Gastrocnemius medialis (tissue), 4 donors: ENCODE measurements at regions of chr10 and their contacts with region 1.

Region 1: GRCh38 chr10:15097011-15097812 is at the start of gene RPP38:
- DNase-seq: peak; percentile 91 to 95
- ATAC-seq: peak; percentile 98
- H3K4me3 ChIP-seq: peak within 1 kb of the TSS; percentile 74 to 92 (median 84)
- H3K27ac ChIP-seq: peak within 1 kb of the TSS; percentile 88 to 98 (median 93)
- H3K4me1 ChIP-seq: peaks cover 18 to 20% of the 10 kb centered on the region in 2 donors
- H3K27me3 ChIP-seq: no peaks in the 10 kb centered on the region
- CTCF ChIP-seq: no peak
- POLR2A ChIP-seq: peak; percentile 70
- total RNA-seq, gene RPP38: 8.9 to 17.2 (median 12.8) TPM

Region 2: DNA sequence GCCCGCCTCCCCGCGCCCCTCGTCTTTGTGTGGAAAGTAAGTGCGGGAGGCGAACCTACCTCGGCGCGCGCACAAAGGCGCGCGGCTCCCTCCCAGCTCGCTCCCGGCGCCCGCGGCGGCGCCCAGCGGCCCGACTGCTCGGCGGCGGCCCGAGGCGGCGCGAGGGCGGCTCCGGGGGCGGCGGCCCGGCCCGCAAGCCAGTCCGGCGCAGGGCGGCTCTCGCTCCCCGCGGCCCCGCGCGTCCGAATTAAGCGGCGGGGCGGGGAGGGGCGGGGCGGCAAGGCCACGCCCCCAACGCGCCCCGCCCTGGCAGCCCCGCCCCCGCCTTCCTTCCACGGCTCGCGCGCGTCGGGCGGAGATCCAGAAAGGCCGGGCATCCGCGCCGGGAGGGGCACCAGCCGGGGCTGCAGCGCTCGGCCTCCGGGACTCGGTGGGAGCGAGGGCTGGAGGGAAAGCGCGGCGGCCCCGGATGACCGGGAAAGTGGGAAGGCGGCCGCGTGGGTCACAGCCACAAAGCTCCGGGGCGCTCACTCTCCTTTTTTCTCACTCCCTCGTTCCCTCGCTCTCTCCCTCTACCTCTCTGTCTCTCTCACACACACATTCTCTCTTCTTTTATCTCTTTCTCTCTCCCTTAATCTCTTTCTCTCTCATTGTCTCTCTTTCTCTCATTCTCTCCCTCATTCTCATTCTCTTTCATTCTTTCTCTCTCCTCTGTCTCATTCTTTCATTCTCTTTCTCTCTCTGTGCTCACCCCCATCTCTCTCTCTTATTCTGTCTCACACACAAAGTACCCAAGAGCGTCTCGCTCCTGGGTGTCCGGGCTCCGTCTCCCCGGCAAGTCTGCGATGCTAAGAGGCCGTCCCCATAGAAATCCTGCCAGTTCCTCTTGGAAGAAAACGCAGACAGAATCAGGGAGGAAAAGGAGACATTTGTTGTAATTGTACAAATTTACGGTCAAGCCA is 492.8 kb before region 1 on chr10:
- in situ Hi-C with region 1: no loop called
- intact Hi-C with region 1: loop called (anchors 2 kb)
- DNase-seq: peak; percentile 52 to 53
- ATAC-seq: peak; percentile 89 to 90
- H3K4me3 ChIP-seq: peak overlapping the region; percentile 56 to 79 (median 66)
- H3K27ac ChIP-seq: peak overlapping the region; percentile 30 to 58 (median 44)
- H3K4me1 ChIP-seq: peaks cover 7 to 12% of the 10 kb centered on the region in 2 donors
- H3K27me3 ChIP-seq: no peaks in the 10 kb centered on the region
- CTCF ChIP-seq: no peak
- POLR2A ChIP-seq: peak in 1 of 2 donors; percentile 66

Region 3: DNA sequence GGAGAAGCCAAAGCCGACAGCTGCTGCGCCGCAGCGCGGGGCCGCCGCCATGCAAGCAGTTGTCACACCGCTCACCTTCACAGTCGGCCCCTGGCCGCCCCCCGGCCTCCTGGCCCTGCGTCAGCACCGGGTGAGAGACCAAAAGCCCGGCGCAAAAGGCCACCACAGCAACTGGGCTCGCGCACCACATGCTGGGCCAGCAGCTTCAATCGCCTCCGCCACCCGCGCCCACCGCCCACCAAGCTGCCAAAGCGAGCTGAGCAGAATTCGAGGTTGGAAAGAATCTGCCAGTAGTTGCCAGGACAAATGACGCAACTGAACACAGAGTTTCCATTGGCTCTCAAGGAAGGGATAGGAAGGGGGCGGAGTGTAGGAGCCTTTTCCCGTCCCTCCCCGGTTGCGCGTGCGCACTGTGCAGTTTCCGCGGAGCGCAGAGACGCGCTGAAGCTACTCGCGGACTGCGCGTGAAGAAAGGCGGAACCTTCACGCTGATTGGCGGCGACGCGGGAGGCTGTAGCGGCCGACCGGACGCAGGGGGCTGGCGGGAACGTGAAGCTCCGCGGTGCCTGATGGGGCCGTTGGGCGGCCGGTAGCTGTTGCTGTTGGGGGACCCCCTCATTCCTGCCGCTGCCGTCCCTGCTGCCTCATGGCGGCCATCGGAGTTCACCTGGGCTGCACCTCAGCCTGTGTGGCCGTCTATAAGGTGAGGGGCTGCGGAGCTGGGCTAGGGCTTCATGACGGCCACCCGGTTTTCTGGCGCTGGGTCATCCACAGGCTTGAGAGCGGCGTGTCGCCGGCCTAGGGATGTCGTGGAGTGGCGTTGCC is 259.2 kb before region 1 on chr10 and contains the starts of genes CDNF, HSPA14 and MSANTD7:
- in situ Hi-C with region 1: loop called in 2 of 4 experiments (anchors 10 to 25 kb)
- intact Hi-C with region 1: loop called (anchors 5 kb)
- DNase-seq: peak; percentile 98 to 99
- ATAC-seq: peak; percentile 98 to 99
- H3K4me3 ChIP-seq: peak within 1 kb of the TSS; percentile 92 to 98 (median 94)
- H3K27ac ChIP-seq: peak within 1 kb of the TSS; percentile 92 to 98 (median 96)
- H3K4me1 ChIP-seq: peaks cover 22 to 26% of the 10 kb centered on the region in 2 donors
- H3K27me3 ChIP-seq: no peaks in the 10 kb centered on the region
- CTCF ChIP-seq: no peak
- POLR2A ChIP-seq: peak; percentile 81 to 93
- total RNA-seq, gene CDNF: 8.6 to 18.3 (median 10.9) TPM
- total RNA-seq, gene HSPA14: 17.7 to 25.5 (median 22.1) TPM
- total RNA-seq, gene MSANTD7: 4.7 to 8.5 (median 5.8) TPM

Region 4: DNA sequence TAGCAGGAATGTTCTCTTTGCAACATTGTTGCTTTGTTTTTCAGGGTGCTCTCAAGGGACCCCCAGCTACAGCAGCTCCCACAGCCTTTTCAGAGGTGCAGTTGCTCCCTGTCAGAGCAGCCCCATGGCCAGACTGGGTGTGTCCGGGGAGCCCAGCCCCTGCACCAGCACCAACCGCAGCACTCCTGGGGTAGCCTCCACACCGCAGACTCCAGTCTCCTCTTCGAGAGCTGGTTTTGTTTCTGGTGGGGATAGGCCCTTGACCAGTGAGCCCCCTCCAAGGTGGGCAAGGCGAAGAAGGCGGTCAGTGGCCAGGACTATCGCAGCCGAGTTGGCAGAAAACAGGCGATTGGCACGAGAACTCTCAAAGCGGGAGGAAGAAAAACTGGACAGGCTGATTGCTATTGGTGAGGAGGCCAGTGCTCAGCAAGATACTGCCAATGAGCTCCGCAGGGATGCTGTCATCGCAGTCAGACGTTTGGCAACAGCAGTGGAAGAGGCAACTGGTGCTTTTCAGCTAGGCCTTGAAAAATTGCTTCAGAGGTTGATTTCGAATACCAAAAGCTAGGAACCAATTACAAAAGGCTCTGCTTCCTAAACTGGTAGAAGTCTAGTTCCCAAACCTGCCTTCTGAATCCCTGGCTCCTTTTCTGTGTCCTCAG is 253.8 kb before region 1 on chr10:
- in situ Hi-C with region 1: loop called in 2 of 4 experiments (anchors 10 to 25 kb)
- intact Hi-C with region 1: loop called (anchors 5 kb)
- DNase-seq: no peak
- ATAC-seq: no peak
- H3K4me3 ChIP-seq: no peak overlapping the region
- H3K27ac ChIP-seq: no peak overlapping the region
- H3K4me1 ChIP-seq: peaks cover 7 to 11% of the 10 kb centered on the region in 2 donors
- H3K27me3 ChIP-seq: no peaks in the 10 kb centered on the region
- CTCF ChIP-seq: no peak
- POLR2A ChIP-seq: no peak

Region 5: GRCh38 chr10:14878266-14879054 is 218.8 kb before region 1 on chr10 and contains the start of gene SUV39H2:
- in situ Hi-C with region 1: no loop called
- intact Hi-C with region 1: loop called (anchors 5 kb)
- DNase-seq: peak; percentile 89 to 93
- ATAC-seq: peak; percentile 85 to 88
- H3K4me3 ChIP-seq: peak within 1 kb of the TSS; percentile 89 to 95 (median 94)
- H3K27ac ChIP-seq: peak within 1 kb of the TSS; percentile 97 to 99 (median 99)
- H3K4me1 ChIP-seq: peaks cover 30 to 34% of the 10 kb centered on the region in 2 donors
- H3K27me3 ChIP-seq: no peaks in the 10 kb centered on the region
- CTCF ChIP-seq: peak in 2 of 5 experiments; percentile 5 to 8
- POLR2A ChIP-seq: peak; percentile 87 to 88
- total RNA-seq, gene SUV39H2: 0.71 to 7.4 (median 5.0) TPM

Region 6: DNA sequence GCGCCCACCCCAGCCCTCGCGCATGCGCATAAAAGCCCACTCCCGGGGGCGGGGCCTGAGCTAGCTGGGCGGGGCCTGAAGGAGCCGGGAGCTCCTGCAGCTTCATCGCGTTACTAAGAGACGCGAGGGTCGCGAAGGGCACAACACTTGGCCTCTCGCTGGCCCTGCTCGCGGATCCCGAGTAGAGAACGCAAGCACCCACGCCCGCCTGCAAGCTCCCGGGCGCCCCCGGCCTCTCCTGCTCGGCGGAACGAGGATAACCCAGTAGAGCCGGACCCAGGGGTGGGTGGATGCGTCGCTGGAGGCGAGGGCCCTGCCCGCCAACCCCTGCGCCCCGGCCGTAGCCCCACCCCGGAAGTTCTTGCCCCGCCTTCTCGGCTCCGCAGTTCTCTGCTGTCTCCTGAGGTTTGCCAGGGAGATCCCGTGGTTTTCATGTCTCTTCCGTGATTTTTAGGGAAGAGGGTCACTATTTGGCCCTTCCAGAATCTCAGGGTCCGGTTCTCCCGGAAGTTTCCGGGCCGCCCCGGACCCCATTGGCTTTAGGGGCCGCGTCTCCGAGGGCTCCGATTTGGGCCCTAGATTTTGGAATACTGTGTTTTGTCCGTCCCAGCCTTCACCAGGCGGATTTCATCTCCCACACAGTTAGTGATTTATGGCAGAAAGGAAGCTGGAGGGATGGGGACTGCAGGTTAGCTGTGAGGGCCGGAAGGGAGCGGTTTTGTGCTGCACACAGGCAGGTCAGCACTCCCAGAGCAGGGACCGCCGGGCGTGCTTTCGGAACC is 137.7 kb before region 1 on chr10 and contains the start of gene MEIG1:
- in situ Hi-C with region 1: loop called in 3 of 4 experiments (anchors 10 kb)
- intact Hi-C with region 1: loop called (anchors 2 kb)
- DNase-seq: peak; percentile 90 to 91
- ATAC-seq: peak; percentile 91 to 95
- H3K4me3 ChIP-seq: peak within 1 kb of the TSS; percentile 70 to 96 (median 81)
- H3K27ac ChIP-seq: peak within 1 kb of the TSS; percentile 94 to 98 (median 96)
- H3K4me1 ChIP-seq: peaks cover 4 to 6% of the 10 kb centered on the region in 2 donors
- H3K27me3 ChIP-seq: no peaks in the 10 kb centered on the region
- CTCF ChIP-seq: no peak
- POLR2A ChIP-seq: peak; percentile 42 to 52
- total RNA-seq, gene MEIG1: not detected

Region 7: GRCh38 chr10:15068802-15069201 is 28.4 kb before region 1 on chr10:
- in situ Hi-C with region 1: no loop called
- intact Hi-C with region 1: no loop called
- DNase-seq: no peak
- ATAC-seq: no peak
- H3K4me3 ChIP-seq: no peak overlapping the region
- H3K27ac ChIP-seq: no peak overlapping the region
- H3K4me1 ChIP-seq: no peaks in the 10 kb centered on the region
- H3K27me3 ChIP-seq: no peaks in the 10 kb centered on the region
- CTCF ChIP-seq: no peak
- POLR2A ChIP-seq: no peak

Region 8: DNA sequence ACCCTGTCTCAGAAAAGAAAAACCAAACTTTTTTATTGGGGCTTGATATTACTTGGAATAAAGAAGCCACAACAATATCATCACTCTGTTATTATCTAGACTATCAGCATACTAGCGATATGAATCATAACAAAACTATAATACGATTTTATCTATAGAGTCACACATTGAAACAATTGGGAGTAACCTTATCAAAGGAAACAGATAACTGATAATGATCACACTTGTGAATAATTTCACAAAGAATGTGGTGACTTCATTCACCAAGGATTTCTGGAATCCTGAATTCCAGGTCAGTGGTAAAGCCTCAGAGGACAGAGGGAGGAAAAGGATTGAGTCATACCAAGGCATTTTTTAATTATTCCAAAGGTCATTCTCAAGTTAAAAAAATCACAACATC is 103.4 kb after region 1 on chr10:
- in situ Hi-C with region 1: no loop called
- intact Hi-C with region 1: no loop called
- DNase-seq: no peak
- ATAC-seq: peak; percentile 56 to 70
- H3K4me3 ChIP-seq: no peak overlapping the region
- H3K27ac ChIP-seq: peak overlapping the region; percentile 5 to 54 (median 27)
- H3K4me1 ChIP-seq: peaks cover 0 to 7% of the 10 kb centered on the region in 2 donors
- H3K27me3 ChIP-seq: no peaks in the 10 kb centered on the region
- CTCF ChIP-seq: no peak
- POLR2A ChIP-seq: no peak